Naive thymus-derived CD4-positive, alpha-beta T cell (primary cell): ENCODE measurements at regions of chr3 and their contacts with region 1.

Region 1: DNA sequence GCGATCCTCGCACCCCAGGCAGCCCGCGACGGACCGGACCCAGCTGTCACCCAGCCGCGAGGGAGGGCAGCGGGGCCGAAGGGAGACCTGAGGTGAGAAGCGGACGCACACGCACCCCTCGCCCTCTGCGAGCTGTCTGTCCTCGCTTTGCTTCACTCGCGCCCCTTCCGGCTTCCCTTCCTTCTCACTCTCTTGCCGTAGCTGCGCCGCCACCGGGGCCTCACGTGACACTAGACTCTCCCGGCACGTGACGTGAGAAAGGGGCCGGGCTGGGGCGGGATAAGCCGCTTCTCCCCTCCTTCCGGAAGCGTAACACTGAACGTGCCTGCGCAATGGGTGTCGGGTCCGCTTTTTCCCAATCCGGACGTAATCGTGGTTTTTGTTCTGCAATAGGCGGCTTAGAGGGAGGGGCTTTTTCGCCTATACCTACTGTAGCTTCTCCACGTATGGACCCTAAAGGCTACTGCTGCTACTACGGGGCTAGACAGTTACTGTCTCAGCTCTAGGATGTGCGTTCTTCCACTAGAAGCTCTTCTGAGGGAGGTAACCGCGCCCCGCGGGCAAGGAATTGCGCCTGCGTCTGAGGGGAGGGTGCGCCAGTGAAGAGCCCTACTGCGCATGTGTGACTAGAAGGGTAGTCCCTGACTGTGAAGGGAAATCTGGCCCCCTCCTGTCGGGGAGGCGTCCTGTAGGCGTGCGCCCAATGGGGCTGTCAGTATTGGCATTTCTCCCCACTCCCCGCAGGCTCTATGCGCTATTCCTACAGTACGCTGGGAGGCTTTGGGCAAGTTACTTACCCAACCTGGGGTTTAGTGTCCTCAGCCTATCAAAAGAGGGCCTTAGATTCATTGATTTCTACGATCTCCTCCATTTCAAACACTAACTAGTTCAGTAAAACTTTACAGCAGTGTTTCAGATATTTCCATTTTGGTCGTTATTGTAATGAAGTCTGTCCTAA is at the starts of genes ATG3 and SLC35A5:
- DNase-seq: peak; percentile 97 to 100 (median 99)
- ATAC-seq: peak; percentile 88
- H3K4me3 ChIP-seq: peak within 1 kb of the TSS; percentile 86
- H3K4me3 Mint-ChIP-seq: peak within 1 kb of the TSS; percentile 93 to 100 (median 98)
- H3K27ac ChIP-seq: peak within 1 kb of the TSS; percentile 91
- H3K27ac Mint-ChIP-seq: peak within 1 kb of the TSS; percentile 96 to 100 (median 99)
- H3K4me1 ChIP-seq: peaks cover 13 to 15% of the 10 kb centered on the region in 2 donors
- H3K4me1 Mint-ChIP-seq: peaks cover 25 to 73% (median 58%) of the 10 kb centered on the region in 7 donors
- H3K27me3 ChIP-seq: no peaks in the 10 kb centered on the region
- H3K27me3 Mint-ChIP-seq: no peaks in the 10 kb centered on the region
- total RNA-seq, gene ATG3: 35.1 to 65.8 (median 50.3) TPM
- total RNA-seq, gene SLC35A5: 10.4 to 24.6 (median 20.8) TPM

Region 2: GRCh38 chr3:111071257-111072015 is 1490.6 kb before region 1 on chr3 and contains the start of gene NECTIN3:
- CTCF ChIA-PET with region 1: no interaction called
- POLR2A ChIA-PET with region 1: no interaction called
- intact Hi-C with region 1: loop called in 1 of 2 experiments (anchors 5 kb)
- DNase-seq: peak; percentile 59 to 89 (median 80)
- ATAC-seq: peak; percentile 96
- H3K4me3 ChIP-seq: peak within 1 kb of the TSS; percentile 76
- H3K4me3 Mint-ChIP-seq: peak within 1 kb of the TSS; percentile 90 to 98 (median 94)
- H3K27ac ChIP-seq: peak within 1 kb of the TSS; percentile 52
- H3K27ac Mint-ChIP-seq: peak within 1 kb of the TSS; percentile 63 to 91 (median 87)
- H3K4me1 ChIP-seq: peaks cover 9% of the 10 kb centered on the region in 2 donors
- H3K4me1 Mint-ChIP-seq: peaks cover 24 to 34% (median 26%) of the 10 kb centered on the region in 7 donors
- H3K27me3 ChIP-seq: peaks cover 0 to 6% of the 10 kb centered on the region in 2 donors
- H3K27me3 Mint-ChIP-seq: peaks cover 29 to 64% (median 36%) of the 10 kb centered on the region in 5 donors
- total RNA-seq, gene NECTIN3: 2.4 to 7.2 (median 4.6) TPM

Region 3: DNA sequence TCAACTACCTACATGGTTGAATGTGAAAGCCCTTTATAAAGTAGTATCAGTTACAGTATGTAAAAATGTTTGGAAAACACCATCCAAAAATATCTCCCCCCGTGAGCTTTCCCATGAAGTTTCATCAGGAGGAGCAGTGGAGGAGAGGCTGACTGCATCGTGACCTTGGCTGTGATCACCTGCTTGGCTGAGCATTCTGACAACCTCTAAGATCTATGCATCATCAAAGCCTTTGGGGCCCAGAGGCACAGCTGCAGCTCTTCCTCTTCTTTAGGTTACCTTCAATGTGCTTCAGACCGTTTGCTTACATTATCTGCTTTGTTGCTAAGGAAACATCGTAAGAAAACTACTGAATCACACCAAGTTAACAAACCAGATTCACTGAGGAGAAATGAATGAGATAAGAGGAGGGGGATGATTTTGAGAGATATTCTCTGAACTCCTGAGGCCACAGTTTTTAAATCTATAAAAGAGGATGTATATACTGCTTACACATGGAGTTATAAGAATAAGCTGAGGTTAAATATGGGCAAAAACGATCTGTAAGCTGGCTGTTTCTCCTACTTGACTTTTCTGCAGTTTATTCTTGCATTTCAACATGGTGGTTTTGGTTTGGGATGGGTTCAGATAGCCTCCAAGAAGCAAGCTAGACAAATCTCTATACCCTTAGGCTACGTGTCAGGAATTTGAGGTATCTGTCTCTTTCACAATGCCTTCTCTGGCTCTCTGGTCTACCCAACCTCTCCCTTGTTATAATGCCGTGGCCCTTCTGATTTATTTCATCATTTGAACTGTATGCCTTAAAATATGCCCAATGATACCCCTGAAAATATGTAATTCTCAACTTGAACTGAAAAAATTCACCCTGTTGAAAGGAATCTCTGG is 432.9 kb before region 1 on chr3:
- CTCF ChIA-PET with region 1: no interaction called
- POLR2A ChIA-PET with region 1: interaction called, 4 read pairs
- intact Hi-C with region 1: loop called (anchors 1 to 2 kb)
- DNase-seq: peak in 8 of 9 donors; percentile 39 to 88 (median 83)
- ATAC-seq: peak; percentile 82
- H3K4me3 ChIP-seq: no peak overlapping the region
- H3K4me3 Mint-ChIP-seq: peak overlapping the region; percentile 23 to 100 (median 64)
- H3K27ac ChIP-seq: peak overlapping the region; percentile 82
- H3K27ac Mint-ChIP-seq: peak overlapping the region; percentile 87 to 95 (median 93)
- H3K4me1 ChIP-seq: peaks cover 41 to 72% of the 10 kb centered on the region in 2 donors
- H3K4me1 Mint-ChIP-seq: peaks cover 49 to 92% (median 90%) of the 10 kb centered on the region in 7 donors
- H3K27me3 ChIP-seq: no peaks in the 10 kb centered on the region
- H3K27me3 Mint-ChIP-seq: no peaks in the 10 kb centered on the region

Region 4: DNA sequence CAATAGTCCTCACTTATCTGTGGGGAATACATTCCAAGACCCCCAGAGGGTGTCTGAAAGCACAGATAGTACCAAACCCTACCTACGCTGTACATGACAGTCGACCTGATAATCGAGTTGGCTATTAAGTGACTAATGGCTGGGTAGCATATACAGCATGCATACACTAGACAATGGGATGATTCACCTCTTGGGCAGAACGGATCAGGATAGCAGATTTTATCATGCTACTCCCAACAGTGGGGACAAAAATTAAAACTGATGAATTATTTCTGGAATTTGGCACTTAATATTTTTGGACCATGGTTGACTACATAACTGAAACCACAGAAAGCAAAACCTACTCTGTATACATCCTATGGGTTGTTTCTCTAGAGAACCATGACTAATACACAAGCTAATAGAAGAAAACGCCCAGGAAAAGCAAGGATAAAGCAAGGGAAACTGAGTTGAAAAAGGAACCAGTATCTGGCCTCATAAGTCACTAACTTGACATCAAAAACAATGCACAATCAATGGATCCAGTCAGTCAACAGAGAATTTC is 15.7 kb before region 1 on chr3:
- CTCF ChIA-PET with region 1: no interaction called
- POLR2A ChIA-PET with region 1: interaction called, 24 read pairs
- intact Hi-C with region 1: loop called in 1 of 2 experiments (anchors 2 kb)
- DNase-seq: no peak
- ATAC-seq: no peak
- H3K4me3 ChIP-seq: no peak overlapping the region
- H3K4me3 Mint-ChIP-seq: no peak overlapping the region
- H3K27ac ChIP-seq: no peak overlapping the region
- H3K27ac Mint-ChIP-seq: no peak overlapping the region
- H3K4me1 ChIP-seq: no peaks in the 10 kb centered on the region
- H3K4me1 Mint-ChIP-seq: peaks cover 3 to 36% (median 16%) of the 10 kb centered on the region in 7 donors
- H3K27me3 ChIP-seq: no peaks in the 10 kb centered on the region
- H3K27me3 Mint-ChIP-seq: no peaks in the 10 kb centered on the region

Region 5: DNA sequence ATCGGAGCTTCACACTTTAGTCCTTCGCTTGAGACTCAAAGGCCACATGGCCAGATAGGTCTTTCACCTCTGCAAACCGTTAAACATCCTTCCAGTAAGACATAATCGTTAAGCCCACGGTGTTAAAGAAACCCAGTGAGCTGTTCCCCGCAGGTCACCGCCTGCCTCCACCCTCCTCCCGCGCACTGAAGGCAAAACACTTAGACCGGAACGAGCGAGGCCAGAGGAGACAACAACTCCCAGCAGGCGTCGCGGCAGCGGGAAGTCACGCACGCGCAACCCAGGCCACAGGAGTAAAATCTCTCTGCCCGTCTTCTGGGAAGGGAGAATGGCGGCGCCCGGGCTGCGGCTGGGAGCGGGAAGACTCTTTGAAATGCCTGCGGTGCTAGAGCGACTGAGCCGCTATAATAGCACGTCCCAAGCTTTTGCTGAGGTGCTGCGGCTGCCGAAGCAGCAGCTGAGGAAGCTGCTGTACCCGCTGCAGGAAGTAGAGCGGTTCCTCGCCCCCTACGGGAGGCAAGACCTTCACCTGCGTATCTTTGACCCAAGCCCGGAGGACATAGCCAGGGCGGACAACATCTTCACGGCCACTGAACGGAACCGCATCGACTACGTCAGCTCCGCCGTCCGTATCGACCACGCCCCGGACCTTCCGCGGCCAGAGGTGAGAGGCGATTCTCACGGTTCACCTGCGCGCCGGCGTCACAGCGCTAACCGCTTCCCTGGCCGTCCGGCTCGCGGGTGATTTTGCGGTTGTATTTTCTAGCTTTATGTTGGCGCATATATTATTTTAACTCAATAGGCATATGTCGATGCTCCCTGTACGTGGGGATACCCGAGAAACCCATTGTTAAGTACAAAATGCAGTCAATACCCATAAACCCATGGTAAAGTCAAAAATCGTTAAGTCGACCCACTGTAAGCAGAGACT is 428.9 kb after region 1 on chr3 and contains the start of gene GTPBP8:
- CTCF ChIA-PET with region 1: no interaction called
- POLR2A ChIA-PET with region 1: interaction called, 7 read pairs
- intact Hi-C with region 1: loop called (anchors 1 kb)
- DNase-seq: peak; percentile 62 to 82 (median 78)
- ATAC-seq: peak; percentile 91
- H3K4me3 ChIP-seq: peak within 1 kb of the TSS; percentile 86
- H3K4me3 Mint-ChIP-seq: peak within 1 kb of the TSS; percentile 90 to 99 (median 95)
- H3K27ac ChIP-seq: peak within 1 kb of the TSS; percentile 86
- H3K27ac Mint-ChIP-seq: peak within 1 kb of the TSS; percentile 91 to 98 (median 95)
- H3K4me1 ChIP-seq: peaks cover 19 to 27% of the 10 kb centered on the region in 2 donors
- H3K4me1 Mint-ChIP-seq: peaks cover 30 to 85% (median 77%) of the 10 kb centered on the region in 7 donors
- H3K27me3 ChIP-seq: no peaks in the 10 kb centered on the region
- H3K27me3 Mint-ChIP-seq: no peaks in the 10 kb centered on the region
- total RNA-seq, gene GTPBP8: 12.6 to 49.1 (median 26.4) TPM

Region 6: DNA sequence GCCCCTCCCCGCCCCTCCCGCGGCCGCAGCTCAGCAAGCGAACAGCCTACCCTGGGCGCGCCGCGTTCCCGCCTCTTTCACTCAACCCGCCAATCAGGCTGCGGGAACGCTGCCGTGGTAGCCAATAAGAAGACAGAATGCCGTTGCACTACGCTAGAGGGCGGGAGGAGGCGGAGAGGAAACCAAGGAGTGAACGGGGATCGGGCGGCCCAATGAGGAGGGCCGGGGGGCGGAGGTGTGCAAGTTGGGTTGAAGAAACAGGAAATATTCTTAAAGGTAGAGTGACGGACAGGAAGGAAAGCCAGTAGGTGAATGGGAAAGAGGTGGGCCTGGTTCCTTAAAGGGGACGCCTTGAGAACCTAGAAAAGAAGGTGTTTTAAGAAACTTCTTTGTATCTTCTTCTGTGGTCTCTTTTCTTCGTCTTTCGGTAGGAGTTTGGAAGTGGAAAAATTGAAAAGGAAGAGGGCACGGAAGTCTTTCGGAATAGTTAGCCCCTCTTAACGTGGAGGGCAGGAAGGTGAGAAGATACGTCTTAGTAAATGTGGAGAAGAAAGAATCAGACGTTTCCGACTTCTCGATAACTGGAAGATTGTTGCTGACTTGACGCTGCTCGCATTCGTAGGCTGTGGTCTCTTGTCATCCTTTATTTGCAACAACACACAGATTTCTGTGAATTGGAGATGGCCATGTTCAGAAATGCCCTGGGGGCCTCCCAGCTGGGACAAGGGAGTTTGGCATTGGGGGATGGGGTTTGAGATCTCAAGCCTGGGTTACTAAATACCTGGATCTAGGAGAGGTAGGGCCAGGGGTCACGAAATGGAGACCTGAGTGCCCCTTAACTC is 1134.9 kb after region 1 on chr3:
- CTCF ChIA-PET with region 1: no interaction called
- POLR2A ChIA-PET with region 1: no interaction called
- intact Hi-C with region 1: loop called (anchors 1 kb)
- DNase-seq: peak; percentile 96 to 100 (median 99)
- ATAC-seq: peak; percentile 93
- H3K4me3 ChIP-seq: peak overlapping the region; percentile 82
- H3K4me3 Mint-ChIP-seq: no peak overlapping the region
- H3K27ac ChIP-seq: peak overlapping the region; percentile 99
- H3K27ac Mint-ChIP-seq: no peak overlapping the region
- H3K4me1 ChIP-seq: peaks cover 11 to 27% of the 10 kb centered on the region in 2 donors
- H3K4me1 Mint-ChIP-seq: peaks cover 23 to 36% (median 29%) of the 10 kb centered on the region in 7 donors
- H3K27me3 ChIP-seq: no peaks in the 10 kb centered on the region
- H3K27me3 Mint-ChIP-seq: no peaks in the 10 kb centered on the region